MCF 10A (cell line): ENCODE measurements at regions of chr1 and their contacts with region 1.

Region 1: DNA sequence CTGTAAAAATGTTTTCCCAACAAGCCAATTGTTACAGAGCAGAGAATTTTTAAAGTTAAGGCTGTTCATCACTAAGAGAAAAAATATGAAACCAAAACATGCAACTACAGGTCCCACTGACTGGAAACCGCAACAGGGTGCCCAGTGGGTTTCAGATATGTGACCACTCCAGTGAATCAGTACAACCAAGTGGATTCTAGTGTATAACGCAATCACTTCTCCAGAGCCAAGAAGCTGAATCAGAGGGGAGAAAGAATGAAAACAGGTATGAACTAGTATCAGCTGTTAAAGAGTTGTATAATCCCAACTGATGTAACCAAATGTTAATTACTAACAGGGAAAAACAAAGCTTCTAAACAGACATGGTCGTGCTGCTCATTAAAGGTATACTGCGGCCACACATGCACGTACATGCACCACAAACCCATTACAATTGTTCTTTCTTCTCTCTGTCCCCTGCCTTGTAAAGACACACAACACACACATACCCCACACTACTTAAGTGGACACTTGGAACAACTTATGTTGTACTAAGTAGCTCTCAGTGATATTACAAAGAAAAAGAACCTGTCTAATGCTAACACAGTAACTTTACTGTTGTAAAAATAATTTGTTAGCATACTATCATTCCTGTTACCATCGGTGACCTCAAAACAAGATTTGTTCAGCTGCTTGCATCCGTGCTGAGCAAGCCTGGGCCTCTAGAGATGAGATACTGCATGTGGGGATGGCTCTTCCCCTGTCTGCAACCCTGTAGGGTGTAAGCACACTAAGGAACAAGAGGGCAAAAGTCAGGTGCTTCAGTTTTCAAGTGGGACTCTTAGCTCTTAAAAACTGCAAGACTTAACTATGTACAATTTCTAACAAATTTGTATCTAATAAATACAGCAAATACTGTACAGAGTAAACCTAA is 74.2 kb downstream of the PTPN14 start:
- DNase-seq: peak; percentile 100
- H3K4me3 Mint-ChIP-seq: peak overlapping the region; percentile 65
- H3K27ac Mint-ChIP-seq: peak overlapping the region; percentile 88
- H3K4me1 Mint-ChIP-seq: peaks cover 68% of the 10 kb centered on the region
- H3K27me3 Mint-ChIP-seq: no peaks in the 10 kb centered on the region
- CTCF ChIP-seq: no peak

Region 2: DNA sequence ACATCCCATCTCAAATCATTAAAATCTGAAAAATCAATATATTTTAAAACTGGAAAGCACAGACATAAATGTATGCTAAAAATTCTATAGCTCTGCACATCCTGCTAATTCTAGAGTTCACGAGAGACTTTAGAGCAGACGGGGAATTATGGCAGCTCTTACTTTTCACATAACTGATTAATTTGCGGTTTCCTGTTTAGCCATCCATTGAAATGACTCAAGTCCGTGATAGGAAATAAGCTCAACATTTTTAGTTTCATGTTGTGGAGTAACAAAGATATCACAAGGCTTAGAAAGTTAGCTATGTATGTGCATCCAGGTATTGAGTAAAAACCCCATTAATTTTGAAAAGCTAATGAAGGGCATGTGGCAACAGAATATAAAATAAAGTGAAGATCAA is 73.1 kb before region 1 on chr1:
- CTCF ChIA-PET with region 1: interaction called, 6 read pairs
- POLR2A ChIA-PET with region 1: interaction called, 11 read pairs
- intact Hi-C with region 1: no loop called
- DNase-seq: peak; percentile 40
- H3K4me3 Mint-ChIP-seq: no peak overlapping the region
- H3K27ac Mint-ChIP-seq: peak overlapping the region; percentile 20
- H3K4me1 Mint-ChIP-seq: peaks cover 24% of the 10 kb centered on the region
- H3K27me3 Mint-ChIP-seq: no peaks in the 10 kb centered on the region
- CTCF ChIP-seq: no peak

Region 3: GRCh38 chr1:214439352-214440119 is 37.7 kb before region 1 on chr1:
- CTCF ChIA-PET with region 1: interaction called, 32 read pairs
- POLR2A ChIA-PET with region 1: interaction called, 843 read pairs
- intact Hi-C with region 1: loop called (anchors 1 kb)
- DNase-seq: peak; percentile 100
- H3K4me3 Mint-ChIP-seq: peak overlapping the region; percentile 65
- H3K27ac Mint-ChIP-seq: peak overlapping the region; percentile 99
- H3K4me1 Mint-ChIP-seq: peaks cover 61% of the 10 kb centered on the region
- H3K27me3 Mint-ChIP-seq: no peaks in the 10 kb centered on the region
- CTCF ChIP-seq: no peak

Region 4: DNA sequence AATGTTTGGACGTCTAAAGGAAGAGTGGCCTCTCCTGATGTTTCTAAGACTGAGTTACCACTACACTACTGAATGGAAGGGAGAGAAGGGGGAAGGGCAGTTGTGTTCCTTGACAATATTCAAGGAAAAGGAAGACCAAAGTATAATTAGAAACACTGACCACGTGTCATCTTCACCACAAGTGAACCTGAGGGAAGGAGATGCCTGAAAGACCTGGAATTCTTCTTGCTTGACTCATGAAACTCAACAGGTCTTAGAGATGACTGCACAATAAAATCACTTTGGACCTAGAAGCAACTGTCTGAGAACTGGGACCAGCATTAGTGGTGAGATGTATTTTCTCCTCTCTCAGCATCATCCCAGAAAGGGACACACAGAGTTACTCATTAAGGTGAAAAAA is 17.5 kb after region 1 on chr1:
- CTCF ChIA-PET with region 1: interaction called, 36 read pairs
- POLR2A ChIA-PET with region 1: interaction called, 203 read pairs
- intact Hi-C with region 1: no loop called
- DNase-seq: peak; percentile 52
- H3K4me3 Mint-ChIP-seq: no peak overlapping the region
- H3K27ac Mint-ChIP-seq: peak overlapping the region; percentile 18
- H3K4me1 Mint-ChIP-seq: peaks cover 50% of the 10 kb centered on the region
- H3K27me3 Mint-ChIP-seq: no peaks in the 10 kb centered on the region
- CTCF ChIP-seq: no peak

Region 5: GRCh38 chr1:214542275-214543199 is 65.3 kb after region 1 on chr1:
- CTCF ChIA-PET with region 1: interaction called, 12 read pairs
- POLR2A ChIA-PET with region 1: interaction called, 881 read pairs
- intact Hi-C with region 1: no loop called
- DNase-seq: no peak
- H3K4me3 Mint-ChIP-seq: no peak overlapping the region
- H3K27ac Mint-ChIP-seq: peak overlapping the region; percentile 32
- H3K4me1 Mint-ChIP-seq: peaks cover 87% of the 10 kb centered on the region
- H3K27me3 Mint-ChIP-seq: no peaks in the 10 kb centered on the region
- CTCF ChIP-seq: no peak

Region 6: GRCh38 chr1:214602764-214603657 is 125.8 kb after region 1 on chr1 and contains the start of gene CENPF:
- CTCF ChIA-PET with region 1: interaction called, 3 read pairs
- POLR2A ChIA-PET with region 1: interaction called, 18 read pairs
- intact Hi-C with region 1: no loop called
- DNase-seq: peak; percentile 100
- H3K4me3 Mint-ChIP-seq: peak within 1 kb of the TSS; percentile 96
- H3K27ac Mint-ChIP-seq: peak within 1 kb of the TSS; percentile 94
- H3K4me1 Mint-ChIP-seq: peaks cover 16% of the 10 kb centered on the region
- H3K27me3 Mint-ChIP-seq: no peaks in the 10 kb centered on the region
- CTCF ChIP-seq: peak; percentile 28
- total RNA-seq, gene CENPF: 88.8 and 135 TPM in 2 replicates